ENCODE measurements at regions of chr2 and their contacts with region 1.

Region 1: GRCh38 chr2:56801770-56802169 is 618.0 kb downstream of the CCDC85A start:
- DNase-seq: no peak
- ATAC-seq: no peak

Region 2: DNA sequence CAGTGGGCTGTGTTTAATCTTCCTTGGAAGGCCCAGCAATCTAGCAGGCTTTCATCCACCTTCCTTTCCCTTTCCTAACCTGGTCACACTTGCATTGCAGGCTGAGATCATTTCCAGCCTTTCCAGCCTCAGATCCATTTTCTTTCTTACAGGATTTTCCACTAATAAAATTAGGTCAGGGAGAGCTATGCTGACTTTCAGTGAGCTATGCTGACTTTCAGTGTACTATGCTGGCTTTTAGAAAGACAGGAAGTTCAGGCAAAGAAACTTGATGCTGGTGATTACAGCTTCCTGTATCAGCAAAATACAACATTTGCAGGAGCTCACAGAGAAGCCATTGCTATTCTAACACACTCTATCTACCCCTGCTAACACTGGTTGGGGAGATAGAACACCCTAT is 117.0 kb after region 1 on chr2:
- intact Hi-C with region 1: no loop called
- DNase-seq: no peak
- ATAC-seq: no peak

Region 3: DNA sequence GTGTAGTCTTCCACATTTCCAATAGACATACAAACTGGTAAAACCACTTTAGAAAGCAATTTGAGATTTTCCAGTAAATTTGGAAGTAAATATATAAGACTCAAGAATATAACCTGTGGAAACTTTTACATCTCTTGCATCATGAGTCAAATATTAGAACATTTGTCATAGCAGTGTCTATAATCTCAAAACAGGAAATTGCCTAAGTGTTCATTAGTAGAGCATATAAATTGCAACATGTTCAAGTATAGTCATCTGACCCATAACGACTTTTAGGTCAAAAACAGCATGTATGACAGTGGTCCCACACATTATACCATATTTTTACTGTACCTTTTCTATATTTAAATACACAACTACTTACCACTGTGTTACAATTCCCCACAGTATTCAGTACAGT is 689.0 kb after region 1 on chr2:
- intact Hi-C with region 1: loop called (anchors 5 kb)
- DNase-seq: no peak
- ATAC-seq: no peak

Measured in left ventricle myocardium superior (tissue), 1 donor.